ENCODE measurements at regions of chrX and their contacts with region 1.

Region 1: DNA sequence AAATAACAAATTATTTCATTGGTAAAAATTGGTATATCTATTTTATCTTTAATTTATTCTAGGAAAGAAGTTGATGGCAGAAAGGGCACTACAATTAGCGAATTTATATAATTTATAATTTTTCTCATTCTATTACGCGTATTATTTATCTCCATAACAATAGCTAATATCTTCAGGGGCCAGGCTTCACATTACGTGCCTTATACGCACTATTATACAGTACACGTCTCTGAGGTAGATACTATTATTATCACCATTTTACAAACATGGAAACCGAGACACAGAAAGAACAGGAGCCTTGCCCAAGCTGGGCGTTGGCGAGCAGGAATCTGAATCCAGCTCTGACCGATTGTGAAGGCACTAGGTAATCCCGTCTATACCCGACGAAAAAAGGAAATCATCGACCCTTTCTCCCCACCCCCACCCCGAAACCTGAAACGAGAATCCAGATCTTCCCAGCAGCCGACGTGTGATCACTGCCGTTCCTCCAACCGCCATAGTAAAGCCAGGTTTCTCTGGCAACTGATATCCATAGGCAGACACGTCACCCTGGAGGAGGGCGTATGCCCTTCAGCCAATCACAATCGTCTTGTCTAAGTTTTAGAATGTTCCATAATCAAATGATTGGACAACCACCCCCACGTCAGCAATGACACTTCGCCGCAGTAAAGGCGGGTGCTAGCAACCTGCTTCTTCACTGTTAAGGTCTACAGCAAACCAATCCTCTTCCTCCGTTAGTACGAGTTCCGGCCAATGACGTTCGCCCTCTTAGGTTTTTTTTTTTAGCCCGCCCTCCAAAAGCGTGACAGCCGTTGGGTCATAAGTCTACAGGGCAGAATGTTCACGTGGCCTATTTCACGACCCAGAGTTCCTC is at the start of gene MORF4L2:
- DNase-seq: peak; percentile 93
- H3K4me3 ChIP-seq: peak within 1 kb of the TSS; percentile 38 to 80 (median 50)
- H3K27ac ChIP-seq: peak within 1 kb of the TSS; percentile 86 to 97 (median 96)
- H3K4me1 ChIP-seq: peaks cover 5 to 33% (median 16%) of the 10 kb centered on the region in 6 donors
- H3K27me3 ChIP-seq: no peaks in the 10 kb centered on the region
- CTCF ChIP-seq: no peak
- POLR2A ChIP-seq: peak in 2 of 3 donors; percentile 44 to 90
- total RNA-seq, gene MORF4L2: 136 to 222 (median 168) TPM

Region 2: DNA sequence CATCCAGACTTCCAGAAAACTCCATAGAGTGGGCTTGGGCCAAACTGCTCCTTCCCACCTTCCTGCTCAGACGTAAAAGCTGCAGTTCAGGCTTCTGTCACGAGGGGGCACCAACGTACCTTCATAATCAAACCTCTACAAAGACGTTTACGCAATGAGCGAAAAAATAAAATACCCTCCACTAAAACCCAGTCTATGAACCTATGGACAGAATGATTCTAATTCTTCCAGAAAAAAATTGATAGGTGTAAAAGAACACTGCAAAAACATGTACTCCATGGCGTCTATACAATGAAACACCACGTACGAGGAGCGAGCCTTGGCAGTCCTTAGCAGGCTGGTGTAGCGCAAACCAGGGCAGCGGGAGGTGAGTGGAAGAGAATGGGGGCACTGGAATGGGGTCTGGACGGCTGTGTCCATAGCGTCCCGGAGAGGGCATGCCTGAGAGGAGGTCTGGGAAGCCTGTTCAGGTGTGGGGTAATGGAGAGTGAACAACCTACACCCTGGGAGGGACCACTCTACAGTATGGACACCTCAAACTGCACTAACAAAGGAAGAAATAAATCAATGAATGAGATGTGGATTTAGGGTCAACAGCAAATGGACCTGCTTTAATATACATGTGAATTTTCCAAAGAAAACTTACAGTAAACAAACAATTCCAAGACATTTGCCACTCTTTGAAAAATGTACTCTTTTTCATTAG is 152.8 kb before region 1 on chrX:
- intact Hi-C with region 1: loop called (anchors 10 kb)
- DNase-seq: peak; percentile 81
- H3K4me3 ChIP-seq: peak overlapping the region in 3 of 8 donors; percentile 4 to 51 (median 33)
- H3K27ac ChIP-seq: peak overlapping the region in 1 of 8 donors; percentile 16
- H3K4me1 ChIP-seq: peaks cover 0 to 11% (median 0%) of the 10 kb centered on the region in 6 donors
- H3K27me3 ChIP-seq: peaks cover 0 to 7% (median 0%) of the 10 kb centered on the region in 7 donors
- CTCF ChIP-seq: peak; percentile 44 to 84 (median 80)
- POLR2A ChIP-seq: no peak

Measured in spleen (tissue), 13 donors.